Activated T-helper 1 cell treated with anti-CD3 and anti-CD28 coated beads, Interleukin-12 subunit alpha, Interleukin-12 subunit beta, Interleukin-2, Interleukin-4 antibody, amounts not matched to agents 30 ng/mL and 10 ng/mL and 1 ng/mL, durations not matched to agents 14 hours and 24 hours and 36 hours (primary cell): ENCODE measurements at regions of chr3 and their contacts with region 1.

Region 1: GRCh38 chr3:136196401-136197158 is 445 bp upstream of the MSL2 start:
- DNase-seq: peak; percentile 98
- H3K4me3 Mint-ChIP-seq: peak overlapping the region; percentile 82
- H3K27ac Mint-ChIP-seq: peak overlapping the region; percentile 92
- H3K4me1 Mint-ChIP-seq: peaks cover 45% of the 10 kb centered on the region
- H3K27me3 Mint-ChIP-seq: no peaks in the 10 kb centered on the region

Region 2: DNA sequence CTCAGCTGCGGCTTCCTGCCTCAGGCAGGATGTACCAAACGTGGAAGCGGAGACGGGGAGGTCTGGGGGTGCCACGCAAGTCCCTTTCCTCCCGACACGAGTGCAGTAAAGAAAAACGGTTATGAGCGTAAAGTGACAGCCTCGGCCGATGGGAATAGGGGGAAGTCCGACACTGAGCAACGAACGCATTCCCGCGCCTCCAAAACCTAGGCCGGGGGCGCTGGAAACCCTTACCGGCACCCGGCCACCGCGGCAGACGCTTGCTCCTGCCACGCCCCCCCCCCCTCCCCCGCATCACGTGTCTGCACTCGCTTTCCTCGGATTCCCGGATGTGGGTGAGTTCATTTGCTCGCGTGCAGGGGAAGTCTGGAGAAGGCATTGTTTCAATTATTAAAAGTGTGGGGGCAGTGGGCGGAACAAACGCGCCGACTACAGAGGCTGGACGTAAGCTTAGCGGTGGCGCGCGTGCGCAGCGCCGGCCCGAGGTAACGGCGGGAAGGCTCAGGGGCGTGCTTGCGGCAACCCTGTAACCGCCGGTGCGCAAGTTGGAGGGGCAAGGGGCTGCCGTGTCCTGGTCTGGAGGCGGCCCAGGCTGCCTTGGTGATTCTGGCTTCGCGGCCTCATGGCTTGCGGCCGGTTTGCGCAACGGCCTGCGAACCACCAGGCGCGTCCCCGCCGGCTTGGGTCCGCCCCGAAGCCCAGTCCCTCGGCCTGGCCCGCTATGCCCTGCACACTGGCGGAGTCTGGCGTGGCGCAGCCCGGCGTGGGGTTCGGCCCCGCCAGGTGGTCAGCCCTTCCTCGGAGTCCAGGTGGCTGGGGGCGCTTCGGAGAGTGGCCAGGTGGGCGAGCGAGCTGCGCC is 1710.6 kb before region 1 on chr3 and contains the starts of genes ANAPC13 and CEP63:
- intact Hi-C with region 1: loop called (anchors 5 kb)
- DNase-seq: peak; percentile 87
- H3K4me3 Mint-ChIP-seq: peak within 1 kb of the TSS; percentile 92
- H3K27ac Mint-ChIP-seq: peak within 1 kb of the TSS; percentile 100
- H3K4me1 Mint-ChIP-seq: peaks cover 47% of the 10 kb centered on the region
- H3K27me3 Mint-ChIP-seq: peaks cover 3% of the 10 kb centered on the region
- total RNA-seq, gene ANAPC13: 25.2 and 26.8 TPM in 2 replicates
- total RNA-seq, gene CEP63: 20.0 and 22.2 TPM in 2 replicates

Region 3: DNA sequence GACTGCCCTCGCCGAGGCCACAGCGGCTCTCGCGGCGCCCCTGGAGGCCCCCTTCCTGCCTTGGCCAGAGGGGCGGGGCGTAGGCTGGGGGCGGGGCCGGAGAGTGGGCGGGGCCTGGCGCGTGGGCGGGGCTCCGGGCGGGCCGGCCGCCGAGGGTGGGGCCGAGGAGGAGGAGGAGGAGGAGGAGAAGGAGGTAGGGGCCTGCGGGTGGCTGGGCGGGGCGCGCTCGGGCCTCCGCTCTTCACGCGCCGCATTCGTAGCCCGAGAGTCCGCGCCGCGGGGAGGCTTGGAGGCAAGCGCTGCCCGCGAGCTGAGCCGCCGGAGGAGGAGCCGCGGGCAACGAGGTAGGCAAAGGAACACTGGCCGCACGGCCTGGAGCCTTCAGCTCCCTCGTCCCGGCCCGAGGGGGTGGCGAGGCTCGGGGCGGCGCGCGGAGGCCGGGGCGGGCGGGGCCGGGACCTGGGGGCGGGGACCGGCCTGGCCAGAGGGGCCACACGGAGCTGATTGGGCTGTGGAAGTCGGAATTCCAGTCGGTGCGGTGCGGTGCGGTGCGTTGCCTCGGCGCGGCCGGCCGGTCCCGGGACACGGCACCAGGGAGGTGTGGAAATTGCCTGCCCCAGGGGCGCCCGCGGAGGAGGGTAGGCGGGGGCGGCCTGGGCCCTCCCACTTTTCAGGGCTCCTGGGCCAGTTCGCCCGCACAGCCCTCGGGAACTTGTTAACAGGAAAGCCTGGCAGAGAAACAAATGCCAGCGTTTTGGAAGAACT is 230.9 kb before region 1 on chr3 and contains the start of gene PPP2R3A:
- intact Hi-C with region 1: loop called (anchors 2 kb)
- DNase-seq: peak; percentile 58
- H3K4me3 Mint-ChIP-seq: peak within 1 kb of the TSS; percentile 75
- H3K27ac Mint-ChIP-seq: no peak within 1 kb of the TSS
- H3K4me1 Mint-ChIP-seq: peaks cover 5% of the 10 kb centered on the region
- H3K27me3 Mint-ChIP-seq: peaks cover 35% of the 10 kb centered on the region
- total RNA-seq, gene PPP2R3A: 0.15 TPM in 1 of 2 replicates, not detected in the other

Region 4: GRCh38 chr3:136171097-136171542 is 25.5 kb before region 1 on chr3:
- intact Hi-C with region 1: no loop called
- DNase-seq: no peak
- H3K4me3 Mint-ChIP-seq: no peak overlapping the region
- H3K27ac Mint-ChIP-seq: peak overlapping the region; percentile 5
- H3K4me1 Mint-ChIP-seq: peaks cover 22% of the 10 kb centered on the region
- H3K27me3 Mint-ChIP-seq: no peaks in the 10 kb centered on the region

Region 5: DNA sequence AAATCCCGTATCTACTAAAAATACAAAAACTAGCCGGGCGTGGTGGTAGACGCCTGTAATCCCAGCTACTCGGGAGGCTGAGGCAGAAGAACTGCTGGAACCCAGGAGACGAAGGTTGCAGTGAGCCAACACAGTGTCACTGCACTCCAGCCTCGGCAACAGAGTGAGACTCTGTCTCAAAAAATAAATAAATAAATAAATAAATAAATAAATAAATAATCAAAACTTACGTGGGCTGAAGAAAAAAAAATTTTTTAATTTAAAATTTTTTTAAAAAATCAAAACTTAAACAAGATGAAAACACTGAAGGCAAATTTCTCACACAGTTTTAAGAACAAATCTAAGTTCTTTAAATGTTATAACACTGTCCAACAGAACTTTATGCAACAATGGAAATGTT is 14.8 kb before region 1 on chr3:
- intact Hi-C with region 1: loop called (anchors 1 kb)
- DNase-seq: no peak
- H3K4me3 Mint-ChIP-seq: no peak overlapping the region
- H3K27ac Mint-ChIP-seq: no peak overlapping the region
- H3K4me1 Mint-ChIP-seq: peaks cover 40% of the 10 kb centered on the region
- H3K27me3 Mint-ChIP-seq: no peaks in the 10 kb centered on the region

Region 6: GRCh38 chr3:136752422-136753325 is 556.1 kb after region 1 on chr3:
- intact Hi-C with region 1: loop called (anchors 1 kb)
- DNase-seq: peak; percentile 99
- H3K4me3 Mint-ChIP-seq: peak overlapping the region; percentile 86
- H3K27ac Mint-ChIP-seq: peak overlapping the region; percentile 96
- H3K4me1 Mint-ChIP-seq: peaks cover 43% of the 10 kb centered on the region
- H3K27me3 Mint-ChIP-seq: no peaks in the 10 kb centered on the region

Region 7: GRCh38 chr3:136919799-136920580 is 723.4 kb after region 1 on chr3:
- intact Hi-C with region 1: loop called (anchors 2 kb)
- DNase-seq: peak; percentile 33
- H3K4me3 Mint-ChIP-seq: peak overlapping the region; percentile 35
- H3K27ac Mint-ChIP-seq: peak overlapping the region; percentile 72
- H3K4me1 Mint-ChIP-seq: peaks cover 78% of the 10 kb centered on the region
- H3K27me3 Mint-ChIP-seq: no peaks in the 10 kb centered on the region